A549 (cell line): ENCODE measurements at regions of chr3 and their contacts with region 1.

Region 1: DNA sequence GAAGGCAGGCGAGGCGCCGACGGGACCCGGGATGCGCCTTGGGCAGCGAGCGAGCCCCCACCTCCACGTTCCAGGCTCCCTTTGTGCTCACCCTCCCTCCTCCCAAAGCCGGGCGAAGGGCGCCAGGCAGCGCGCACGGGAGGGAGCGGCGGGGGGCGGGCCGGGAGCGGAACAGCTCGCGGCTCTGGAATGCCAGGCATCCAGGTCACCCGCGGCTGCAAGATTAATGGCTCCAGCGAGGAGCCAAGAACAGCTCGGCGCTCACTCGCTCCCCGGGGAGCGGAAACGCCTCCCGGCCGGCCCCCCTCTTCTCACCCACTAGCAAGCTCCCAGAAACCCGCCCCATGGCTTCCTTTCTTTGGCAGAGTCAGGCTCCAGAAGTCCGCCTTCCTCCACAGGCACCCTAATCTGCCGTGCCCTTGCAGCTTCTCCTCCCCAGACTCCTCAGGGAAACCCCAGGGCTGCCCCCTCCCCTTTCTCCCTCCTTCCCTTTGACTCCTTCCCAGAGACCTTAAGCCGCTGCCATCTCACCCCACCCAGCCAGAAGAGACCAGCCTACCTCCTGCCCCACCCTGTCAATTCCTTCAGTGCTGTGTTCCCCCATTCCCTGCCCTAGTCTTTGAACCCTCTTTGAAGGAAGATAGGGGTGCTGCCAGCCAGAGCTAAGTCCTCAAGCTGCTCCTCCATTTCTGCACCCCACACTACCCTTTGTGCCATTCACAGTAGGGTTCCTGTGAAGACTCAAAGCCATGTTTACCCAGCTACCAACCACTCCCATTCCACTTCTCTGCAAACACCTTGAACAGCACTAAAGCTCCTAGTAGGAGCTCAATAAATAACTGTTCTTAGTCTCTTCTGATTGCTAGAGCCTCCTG is 9.9 kb downstream of the AMOTL2 start:
- DNase-seq: peak; percentile 93 to 94
- ATAC-seq: peak; percentile 74 to 82
- H3K4me3 ChIP-seq: peak overlapping the region; percentile 31; the same call in 2 of the 3 replicates
- H3K27ac ChIP-seq: peak overlapping the region; percentile 99 to 100
- H3K4me1 ChIP-seq: peaks cover 97% of the 10 kb centered on the region
- CTCF ChIP-seq: no peak
- EP300 ChIP-seq: peak; percentile 68 to 86; a peak in 3 of 5 replicates
- POLR2A ChIP-seq: no peak
- RAD21 ChIP-seq: peak in 1 of 2 experiments; percentile 37; a peak in 2 of 5 replicates

Region 2: DNA sequence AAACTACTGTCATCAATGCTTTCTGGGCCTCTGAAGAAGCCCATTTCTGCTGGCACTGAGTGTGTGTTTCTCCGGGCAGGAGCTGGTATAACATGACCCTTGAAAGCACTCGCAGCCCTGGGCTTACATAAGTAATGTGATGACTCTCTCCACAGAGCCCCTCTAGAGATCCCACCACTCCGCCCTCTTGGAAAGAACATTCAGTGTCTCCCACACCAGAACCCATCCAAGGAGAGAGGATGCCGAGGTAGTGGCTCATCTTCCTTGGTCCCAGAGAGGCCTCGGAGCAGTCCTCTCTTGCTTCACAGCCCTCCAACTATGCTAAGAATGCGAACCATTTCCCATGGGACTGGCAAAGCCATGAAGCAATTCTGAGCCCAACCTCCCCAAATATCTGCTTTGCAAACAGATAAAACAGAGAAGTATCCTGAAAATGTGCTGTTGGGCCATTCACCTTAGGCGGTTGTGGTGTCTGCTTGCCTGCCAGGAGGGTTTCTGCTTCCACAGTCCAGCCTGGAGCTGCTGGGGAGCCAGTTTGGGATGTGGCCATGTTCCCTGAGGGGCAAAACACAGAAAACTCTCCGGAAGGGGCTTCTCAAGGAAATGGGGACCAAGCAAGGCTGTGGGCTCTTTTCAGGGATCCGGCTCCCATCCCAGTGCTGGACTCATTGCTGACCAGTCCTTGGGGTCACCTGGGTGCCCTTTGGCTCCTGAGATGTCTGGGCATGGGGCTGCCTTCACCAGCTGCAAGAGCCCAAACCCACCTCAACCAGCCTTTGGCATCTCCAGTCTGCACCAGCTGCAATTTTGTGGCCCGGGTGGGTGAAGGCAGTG is 37.3 kb before region 1 on chr3:
- CTCF ChIA-PET with region 1: interaction called, 16 read pairs
- POLR2A ChIA-PET with region 1: interaction called, 27 read pairs
- DNase-seq: peak in 1 of 2 experiments; percentile 94
- ATAC-seq: peak; percentile 82 to 85
- H3K4me3 ChIP-seq: peak overlapping the region; percentile 26
- H3K27ac ChIP-seq: peak overlapping the region; percentile 96 to 100
- H3K4me1 ChIP-seq: peaks cover 76% of the 10 kb centered on the region
- CTCF ChIP-seq: no peak
- EP300 ChIP-seq: peak; percentile 94 to 99; a peak in 4 of 5 replicates
- POLR2A ChIP-seq: no peak
- RAD21 ChIP-seq: peak; percentile 30 to 56; a peak in 3 of 5 replicates

Region 3: GRCh38 chr3:134333522-134334181 is 30.6 kb before region 1 on chr3:
- CTCF ChIA-PET with region 1: interaction called, 16 read pairs
- POLR2A ChIA-PET with region 1: interaction called, 27 read pairs
- DNase-seq: peak in 1 of 2 experiments; percentile 52
- ATAC-seq: peak; percentile 47 to 67; a peak in 5 of 6 replicates
- H3K4me3 ChIP-seq: no peak overlapping the region
- H3K27ac ChIP-seq: peak overlapping the region; percentile 96 to 100
- H3K4me1 ChIP-seq: peaks cover 88% of the 10 kb centered on the region
- CTCF ChIP-seq: no peak
- EP300 ChIP-seq: no peak; a peak in 1 of 5 replicates
- POLR2A ChIP-seq: no peak
- RAD21 ChIP-seq: no peak

Region 4: GRCh38 chr3:134350861-134351333 is 13.4 kb before region 1 on chr3:
- CTCF ChIA-PET with region 1: interaction called, 11 read pairs
- POLR2A ChIA-PET with region 1: interaction called, 31 read pairs
- DNase-seq: no peak
- ATAC-seq: peak in 1 of 2 experiments; percentile 2; a peak in 2 of 6 replicates
- H3K4me3 ChIP-seq: no peak overlapping the region
- H3K27ac ChIP-seq: peak overlapping the region; percentile 87 to 100
- H3K4me1 ChIP-seq: peaks cover 51% of the 10 kb centered on the region
- CTCF ChIP-seq: no peak
- EP300 ChIP-seq: no peak
- POLR2A ChIP-seq: no peak
- RAD21 ChIP-seq: no peak